B cell (primary cell): ENCODE measurements at regions of chr7 and their contacts with region 1.

Region 1: GRCh38 chr7:110852156-110852940 is 238.6 kb upstream of the LRRN3 start:
- DNase-seq: no peak
- ATAC-seq: no peak
- H3K4me3 ChIP-seq: no peak overlapping the region
- H3K4me3 Mint-ChIP-seq: no peak overlapping the region
- H3K27ac ChIP-seq: no peak overlapping the region
- H3K27ac Mint-ChIP-seq: no peak overlapping the region
- H3K4me1 ChIP-seq: no peaks in the 10 kb centered on the region
- H3K4me1 Mint-ChIP-seq: no peaks in the 10 kb centered on the region
- H3K27me3 ChIP-seq: no peaks in the 10 kb centered on the region
- H3K27me3 Mint-ChIP-seq: no peaks in the 10 kb centered on the region
- CTCF ChIP-seq: no peak

Region 2: DNA sequence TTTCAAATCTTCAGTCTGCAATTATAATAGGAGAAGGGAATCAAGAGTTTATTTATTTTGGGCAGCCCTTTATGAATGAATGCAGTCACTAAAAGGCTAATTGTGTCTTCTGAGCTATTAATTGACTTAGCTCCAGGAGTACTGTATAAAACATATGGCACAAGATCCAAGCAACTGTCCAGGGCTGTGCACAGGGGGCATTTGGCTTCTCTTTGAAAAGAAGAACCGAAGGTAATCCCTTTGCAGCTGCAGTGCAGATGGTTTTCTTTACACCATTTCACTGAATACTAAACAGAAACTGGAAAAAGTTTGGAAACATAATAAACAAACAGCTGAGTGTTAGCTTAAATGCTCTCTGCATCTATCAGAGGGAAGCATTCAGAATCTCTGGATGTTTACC is 44.0 kb before region 1 on chr7:
- CTCF ChIA-PET with region 1: no interaction called
- POLR2A ChIA-PET with region 1: no interaction called
- intact Hi-C with region 1: no loop called
- DNase-seq: no peak
- ATAC-seq: no peak
- H3K4me3 ChIP-seq: no peak overlapping the region
- H3K4me3 Mint-ChIP-seq: no peak overlapping the region
- H3K27ac ChIP-seq: no peak overlapping the region
- H3K27ac Mint-ChIP-seq: no peak overlapping the region
- H3K4me1 ChIP-seq: no peaks in the 10 kb centered on the region
- H3K4me1 Mint-ChIP-seq: no peaks in the 10 kb centered on the region
- H3K27me3 ChIP-seq: no peaks in the 10 kb centered on the region
- H3K27me3 Mint-ChIP-seq: no peaks in the 10 kb centered on the region
- CTCF ChIP-seq: no peak

Region 3: DNA sequence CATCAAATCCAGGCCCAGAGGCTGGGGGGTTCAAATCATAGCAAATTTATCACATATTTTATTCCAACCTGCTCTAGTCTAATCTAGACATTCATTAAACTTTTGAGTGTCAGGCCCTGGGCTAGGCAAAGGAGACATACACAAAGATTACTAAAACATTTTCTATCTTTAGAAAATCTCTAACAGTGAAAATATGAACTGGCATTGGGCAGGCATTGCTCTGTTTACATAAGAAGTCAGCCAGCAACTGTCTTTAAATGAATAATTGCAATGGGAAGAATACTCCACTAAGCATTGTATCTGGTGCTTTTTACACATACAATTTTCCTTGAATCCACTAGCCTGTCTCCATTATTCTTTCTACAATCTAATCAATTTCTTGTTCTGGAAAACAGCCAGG is 16.1 kb after region 1 on chr7:
- CTCF ChIA-PET with region 1: interaction called, 3 read pairs
- POLR2A ChIA-PET with region 1: no interaction called
- intact Hi-C with region 1: loop called (anchors 2 kb)
- DNase-seq: no peak
- ATAC-seq: no peak
- H3K4me3 ChIP-seq: no peak overlapping the region
- H3K4me3 Mint-ChIP-seq: no peak overlapping the region
- H3K27ac ChIP-seq: no peak overlapping the region
- H3K27ac Mint-ChIP-seq: no peak overlapping the region
- H3K4me1 ChIP-seq: no peaks in the 10 kb centered on the region
- H3K4me1 Mint-ChIP-seq: no peaks in the 10 kb centered on the region
- H3K27me3 ChIP-seq: no peaks in the 10 kb centered on the region
- H3K27me3 Mint-ChIP-seq: no peaks in the 10 kb centered on the region
- CTCF ChIP-seq: no peak